ENCODE measurements at regions of chr10 and their contacts with region 1.

Region 1: DNA sequence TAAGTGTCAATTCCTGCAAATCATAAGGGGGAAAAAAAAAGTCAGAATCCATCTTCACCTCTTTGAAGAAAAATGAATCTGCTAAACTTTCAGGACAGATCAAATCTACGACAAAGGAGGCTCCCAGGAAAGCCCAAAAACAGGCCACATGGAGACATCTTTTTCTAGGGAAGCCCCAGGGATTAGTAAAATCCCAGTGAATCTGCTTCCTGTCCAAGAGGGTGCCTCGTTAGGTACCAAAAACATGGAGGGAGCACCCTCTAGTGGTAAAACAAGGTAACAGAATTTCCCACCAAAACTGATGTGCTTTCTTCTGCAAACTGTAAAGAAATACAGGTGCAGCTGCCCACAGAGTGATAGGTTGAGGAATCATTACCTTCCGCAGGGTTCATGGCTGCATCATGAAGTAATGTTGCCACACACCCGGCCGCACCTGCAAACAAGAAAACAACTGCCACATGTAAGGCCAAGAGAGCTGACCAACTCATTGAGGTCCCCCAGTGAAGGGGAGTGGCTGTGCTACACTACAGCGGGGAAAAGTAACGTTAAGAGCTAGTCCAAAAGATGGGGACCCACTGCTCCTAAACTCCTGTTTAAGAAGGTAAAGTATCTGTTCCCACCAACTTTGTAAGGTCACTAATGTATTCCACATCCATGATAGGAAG is 7.9 kb downstream of the SLC25A28 start:
- DNase-seq: no peak
- H3K4me3 Mint-ChIP-seq: no peak overlapping the region
- H3K27ac Mint-ChIP-seq: peak overlapping the region; percentile 15
- H3K4me1 Mint-ChIP-seq: peaks cover 28% of the 10 kb centered on the region
- H3K27me3 Mint-ChIP-seq: no peaks in the 10 kb centered on the region

Region 2: GRCh38 chr10:99395750-99396445 is 216.4 kb before region 1 on chr10:
- intact Hi-C with region 1: loop called (anchors 1 kb)
- DNase-seq: no peak
- H3K4me3 Mint-ChIP-seq: no peak overlapping the region
- H3K27ac Mint-ChIP-seq: peak overlapping the region; percentile 43
- H3K4me1 Mint-ChIP-seq: peaks cover 7% of the 10 kb centered on the region
- H3K27me3 Mint-ChIP-seq: no peaks in the 10 kb centered on the region

Region 3: GRCh38 chr10:99435986-99436638 is 176.2 kb before region 1 on chr10:
- intact Hi-C with region 1: loop called (anchors 2 kb)
- DNase-seq: no peak
- H3K4me3 Mint-ChIP-seq: no peak overlapping the region
- H3K27ac Mint-ChIP-seq: no peak overlapping the region
- H3K4me1 Mint-ChIP-seq: peaks cover 15% of the 10 kb centered on the region
- H3K27me3 Mint-ChIP-seq: no peaks in the 10 kb centered on the region

Region 4: GRCh38 chr10:99560277-99561126 is 51.8 kb before region 1 on chr10:
- intact Hi-C with region 1: loop called (anchors 2 kb)
- DNase-seq: no peak
- H3K4me3 Mint-ChIP-seq: no peak overlapping the region
- H3K27ac Mint-ChIP-seq: no peak overlapping the region
- H3K4me1 Mint-ChIP-seq: peaks cover 8% of the 10 kb centered on the region
- H3K27me3 Mint-ChIP-seq: peaks cover 30% of the 10 kb centered on the region

Measured in activated T-helper 2 cell treated with anti-CD3 and anti-CD28 coated beads, Interferon-gamma antibody, Interleukin-2, Interleukin-4, amounts not matched to agents 10 μg/mL and 5 μg/mL and 100 μg/mL, durations not matched to agents 14 hours and 24 hours and 36 hours (primary cell).